Prostate gland (tissue), 2 donors: ENCODE measurements at regions of chr2 and their contacts with region 1.

Region 1: DNA sequence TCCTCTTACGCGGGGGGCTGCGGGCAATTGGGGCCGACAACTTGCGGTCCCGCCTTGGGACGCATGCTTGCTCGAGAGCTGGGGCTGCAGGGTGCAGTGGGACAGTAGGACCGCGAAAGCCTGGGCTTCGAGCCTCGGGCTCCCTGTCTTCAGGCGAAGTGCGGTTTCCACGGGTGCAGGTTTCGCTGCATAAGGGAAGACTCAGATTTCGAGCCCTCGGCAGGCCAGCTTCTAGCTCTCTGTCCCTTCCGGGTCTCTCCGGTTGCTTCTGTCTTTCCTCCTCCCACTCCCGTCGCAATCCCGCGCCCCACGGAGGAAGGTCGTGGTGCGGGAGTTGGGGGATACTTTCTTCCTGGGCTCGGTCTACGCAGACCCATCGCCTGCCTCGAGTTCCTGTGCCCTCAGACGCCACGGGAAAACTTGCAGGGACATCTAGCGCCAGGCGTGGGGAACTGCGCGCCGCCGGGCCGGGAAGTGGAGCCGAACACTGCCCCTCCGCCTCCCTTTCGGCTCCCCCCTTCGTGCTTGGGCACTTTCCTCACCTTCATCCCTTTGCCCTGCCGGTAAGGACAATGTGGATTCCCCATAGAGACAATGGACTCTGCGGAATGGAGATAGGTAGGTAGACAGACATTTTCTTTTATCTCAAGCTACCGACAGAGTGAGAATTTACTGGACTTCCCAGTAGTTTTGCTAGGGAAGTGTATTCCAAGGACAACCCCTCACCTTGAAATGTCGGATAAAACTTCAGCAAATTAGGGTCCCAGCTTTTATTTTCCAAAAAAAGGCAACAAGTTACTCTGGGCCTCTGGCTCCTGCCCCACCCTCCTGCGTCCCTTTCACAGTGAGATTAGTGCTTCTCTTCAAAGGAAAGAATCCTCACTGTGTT is 4.2 kb upstream of the HOXD13 start:
- DNase-seq: no peak
- H3K4me3 ChIP-seq: peak overlapping the region; percentile 10 to 21
- H3K27ac ChIP-seq: peak overlapping the region; percentile 67 to 70
- H3K4me1 ChIP-seq: no peaks in the 10 kb centered on the region
- H3K27me3 ChIP-seq: peaks cover 16% of the 10 kb centered on the region
- CTCF ChIP-seq: peak; percentile 26 to 70 (median 56)
- POLR2A ChIP-seq: no peak

Region 2: GRCh38 chr2:175251425-175252041 is 836.8 kb before region 1 on chr2:
- intact Hi-C with region 1: loop called (anchors 5 kb)
- DNase-seq: no peak
- H3K4me3 ChIP-seq: no peak overlapping the region
- H3K27ac ChIP-seq: no peak overlapping the region
- H3K4me1 ChIP-seq: no peaks in the 10 kb centered on the region
- H3K27me3 ChIP-seq: no peaks in the 10 kb centered on the region
- CTCF ChIP-seq: peak; percentile 15 to 58 (median 42)
- POLR2A ChIP-seq: no peak

Region 3: GRCh38 chr2:175366815-175367214 is 721.5 kb before region 1 on chr2:
- intact Hi-C with region 1: loop called (anchors 5 kb)
- DNase-seq: peak; percentile 26
- H3K4me3 ChIP-seq: no peak overlapping the region
- H3K27ac ChIP-seq: no peak overlapping the region
- H3K4me1 ChIP-seq: no peaks in the 10 kb centered on the region
- H3K27me3 ChIP-seq: no peaks in the 10 kb centered on the region
- CTCF ChIP-seq: peak in 3 of 4 experiments; percentile 49 to 74 (median 65)
- POLR2A ChIP-seq: no peak

Region 4: DNA sequence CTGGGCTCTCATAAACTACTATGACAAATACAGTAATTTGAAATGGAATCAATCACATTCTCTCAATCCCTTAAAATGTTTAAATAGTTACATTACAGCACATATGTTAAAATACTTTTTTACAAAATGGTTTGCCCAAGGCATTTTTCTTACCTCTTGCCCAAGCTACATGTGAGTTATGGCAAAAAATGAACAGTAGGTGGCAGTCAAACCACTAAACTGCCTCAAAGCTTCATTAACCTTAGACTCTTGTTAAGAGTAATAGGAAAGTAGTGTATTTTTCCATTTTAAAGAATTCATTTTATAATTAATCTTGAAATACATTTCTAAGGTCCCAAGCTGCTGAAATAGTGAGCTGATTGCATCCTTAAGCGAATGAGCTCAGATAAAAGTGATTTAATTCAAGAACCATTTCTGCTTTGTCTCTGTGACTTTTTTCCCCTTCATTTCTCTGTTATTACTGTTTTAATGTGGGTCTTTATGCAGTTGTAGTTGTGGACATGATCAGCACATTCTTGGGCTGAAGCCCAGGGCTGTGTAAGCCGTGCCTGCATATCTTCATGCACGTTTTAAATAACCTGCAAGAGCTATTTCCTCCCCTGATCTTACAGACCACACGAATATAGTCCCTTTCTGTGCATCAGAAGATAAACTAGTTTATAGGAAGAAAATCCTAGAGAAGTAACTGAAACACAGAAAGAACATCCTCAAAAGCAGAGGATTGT is 398.0 kb before region 1 on chr2:
- intact Hi-C with region 1: loop called (anchors 2 kb)
- DNase-seq: peak; percentile 41
- H3K4me3 ChIP-seq: no peak overlapping the region
- H3K27ac ChIP-seq: no peak overlapping the region
- H3K4me1 ChIP-seq: no peaks in the 10 kb centered on the region
- H3K27me3 ChIP-seq: no peaks in the 10 kb centered on the region
- CTCF ChIP-seq: peak; percentile 20 to 84 (median 74)
- POLR2A ChIP-seq: no peak